ENCODE measurements at regions of chr5 and their contacts with region 1.

Region 1: GRCh38 chr5:56358703-56359681 is 125.9 kb upstream of the ANKRD55 start:
- DNase-seq: peak; percentile 91 to 96
- H3K4me3 ChIP-seq: no peak overlapping the region
- H3K4me3 Mint-ChIP-seq: peak overlapping the region; percentile 68
- H3K27ac Mint-ChIP-seq: peak overlapping the region; percentile 85
- H3K4me1 ChIP-seq: peaks cover 61% of the 10 kb centered on the region
- H3K4me1 Mint-ChIP-seq: peaks cover 50% of the 10 kb centered on the region
- H3K27me3 ChIP-seq: no peaks in the 10 kb centered on the region
- H3K27me3 Mint-ChIP-seq: no peaks in the 10 kb centered on the region
- CTCF ChIP-seq: no peak

Region 2: GRCh38 chr5:56175488-56175887 is 183.5 kb before region 1 on chr5:
- CTCF ChIA-PET with region 1: no interaction called
- POLR2A ChIA-PET with region 1: no interaction called
- intact Hi-C with region 1: no loop called
- DNase-seq: peak; percentile 56 to 68
- H3K4me3 ChIP-seq: no peak overlapping the region
- H3K4me3 Mint-ChIP-seq: peak overlapping the region; percentile 15
- H3K27ac Mint-ChIP-seq: peak overlapping the region; percentile 96
- H3K4me1 ChIP-seq: peaks cover 19% of the 10 kb centered on the region
- H3K4me1 Mint-ChIP-seq: peaks cover 20% of the 10 kb centered on the region
- H3K27me3 ChIP-seq: no peaks in the 10 kb centered on the region
- H3K27me3 Mint-ChIP-seq: no peaks in the 10 kb centered on the region
- CTCF ChIP-seq: no peak

Region 3: GRCh38 chr5:56270568-56271392 is 88.2 kb before region 1 on chr5:
- CTCF ChIA-PET with region 1: interaction called, 4 read pairs
- POLR2A ChIA-PET with region 1: no interaction called
- intact Hi-C with region 1: loop called (anchors 1 kb)
- DNase-seq: peak; percentile 89 to 92
- H3K4me3 ChIP-seq: no peak overlapping the region
- H3K4me3 Mint-ChIP-seq: no peak overlapping the region
- H3K27ac Mint-ChIP-seq: peak overlapping the region; percentile 74
- H3K4me1 ChIP-seq: peaks cover 25% of the 10 kb centered on the region
- H3K4me1 Mint-ChIP-seq: peaks cover 29% of the 10 kb centered on the region
- H3K27me3 ChIP-seq: no peaks in the 10 kb centered on the region
- H3K27me3 Mint-ChIP-seq: no peaks in the 10 kb centered on the region
- CTCF ChIP-seq: peak; percentile 99

Region 4: DNA sequence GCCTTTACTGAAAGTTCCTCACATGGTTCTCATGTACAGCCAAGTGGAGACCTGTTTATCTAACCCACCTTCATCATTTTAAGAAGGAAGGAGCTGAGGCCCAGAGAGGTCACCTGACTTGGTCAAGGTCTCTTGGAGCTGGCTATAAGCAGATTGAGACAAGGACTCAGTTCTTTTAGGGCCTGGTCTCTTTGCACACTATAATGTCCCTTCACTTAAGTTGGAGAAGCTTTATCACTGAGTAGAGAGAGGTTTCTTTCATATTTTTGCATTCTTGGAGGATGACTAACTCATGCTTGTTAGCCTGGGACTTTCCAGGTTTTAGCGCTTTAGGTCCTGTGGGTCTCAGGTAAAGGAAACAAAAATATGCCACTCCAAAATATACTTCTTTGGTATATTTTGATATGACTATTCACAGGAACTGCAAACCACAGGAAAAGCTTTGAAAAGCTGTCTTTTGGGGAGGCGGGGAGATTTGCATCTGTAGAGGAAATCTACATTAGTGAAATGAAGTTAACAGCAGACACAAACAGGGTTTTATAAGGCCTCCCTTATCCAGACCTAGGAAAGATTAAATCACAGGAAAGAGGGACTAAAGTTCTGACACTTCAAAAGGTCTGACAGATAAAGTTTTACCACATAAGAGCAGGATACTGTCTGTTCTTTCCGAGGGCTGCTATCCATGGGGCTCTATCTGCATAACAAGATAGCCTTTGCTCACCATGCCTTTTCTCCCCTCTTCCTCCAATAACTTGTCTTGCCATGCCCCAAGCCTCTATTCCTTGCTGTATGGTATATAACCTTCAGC is 30.0 kb before region 1 on chr5:
- CTCF ChIA-PET with region 1: no interaction called
- POLR2A ChIA-PET with region 1: interaction called, 3 read pairs
- intact Hi-C with region 1: loop called (anchors 2 kb)
- DNase-seq: peak; percentile 26 to 57
- H3K4me3 ChIP-seq: no peak overlapping the region
- H3K4me3 Mint-ChIP-seq: no peak overlapping the region
- H3K27ac Mint-ChIP-seq: peak overlapping the region; percentile 75
- H3K4me1 ChIP-seq: peaks cover 64% of the 10 kb centered on the region
- H3K4me1 Mint-ChIP-seq: peaks cover 50% of the 10 kb centered on the region
- H3K27me3 ChIP-seq: no peaks in the 10 kb centered on the region
- H3K27me3 Mint-ChIP-seq: no peaks in the 10 kb centered on the region
- CTCF ChIP-seq: no peak

Region 5: GRCh38 chr5:56415356-56415765 is 56.4 kb after region 1 on chr5:
- CTCF ChIA-PET with region 1: interaction called, 4 read pairs
- POLR2A ChIA-PET with region 1: interaction called, 3 read pairs
- intact Hi-C with region 1: loop called (anchors 1 kb)
- DNase-seq: peak; percentile 82 to 90
- H3K4me3 ChIP-seq: no peak overlapping the region
- H3K4me3 Mint-ChIP-seq: peak overlapping the region; percentile 64
- H3K27ac Mint-ChIP-seq: peak overlapping the region; percentile 95
- H3K4me1 ChIP-seq: peaks cover 73% of the 10 kb centered on the region
- H3K4me1 Mint-ChIP-seq: peaks cover 45% of the 10 kb centered on the region
- H3K27me3 ChIP-seq: no peaks in the 10 kb centered on the region
- H3K27me3 Mint-ChIP-seq: no peaks in the 10 kb centered on the region
- CTCF ChIP-seq: no peak

Region 6: DNA sequence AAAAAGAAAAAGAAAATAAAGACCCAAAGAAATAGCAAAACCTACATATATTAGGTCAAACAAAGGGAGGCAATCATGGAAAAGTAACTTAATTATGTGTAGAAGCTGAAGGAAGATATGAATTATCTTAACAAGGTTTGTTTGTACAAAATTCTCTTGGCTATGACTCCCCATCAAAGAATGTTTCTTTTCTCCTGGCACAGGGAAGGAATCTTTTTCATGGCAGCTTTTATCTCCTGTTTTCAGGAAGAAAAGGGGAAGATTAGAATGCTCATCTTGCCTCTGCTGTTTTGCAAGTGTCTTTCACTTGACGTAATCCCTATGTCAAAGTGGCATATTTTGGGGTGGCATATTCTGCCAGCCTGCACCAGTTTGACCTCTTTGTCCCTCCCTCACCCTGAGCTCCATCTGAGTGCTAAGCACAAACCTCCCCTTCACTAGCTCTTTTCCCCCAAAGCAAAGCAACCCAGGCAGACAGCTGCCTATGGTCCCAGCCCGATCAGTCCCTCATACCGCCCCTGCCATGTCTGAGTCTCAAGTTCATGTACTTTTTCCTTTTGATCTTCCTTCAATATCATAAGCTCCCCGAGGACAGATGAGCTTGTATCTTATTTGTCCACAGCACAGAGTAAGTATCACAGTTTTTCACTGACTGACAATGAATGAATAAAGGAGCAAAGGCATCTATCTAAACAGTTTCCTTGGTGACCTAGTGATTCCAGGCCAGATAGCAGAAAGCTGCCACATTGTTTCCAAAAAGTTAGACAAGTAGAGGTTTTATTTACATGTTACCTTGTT is 116.9 kb after region 1 on chr5:
- CTCF ChIA-PET with region 1: no interaction called
- POLR2A ChIA-PET with region 1: interaction called, 5 read pairs
- intact Hi-C with region 1: loop called (anchors 1 kb)
- DNase-seq: no peak
- H3K4me3 ChIP-seq: no peak overlapping the region
- H3K4me3 Mint-ChIP-seq: peak overlapping the region; percentile 8
- H3K27ac Mint-ChIP-seq: peak overlapping the region; percentile 45
- H3K4me1 ChIP-seq: peaks cover 68% of the 10 kb centered on the region
- H3K4me1 Mint-ChIP-seq: peaks cover 36% of the 10 kb centered on the region
- H3K27me3 ChIP-seq: no peaks in the 10 kb centered on the region
- H3K27me3 Mint-ChIP-seq: no peaks in the 10 kb centered on the region
- CTCF ChIP-seq: no peak

Region 7: DNA sequence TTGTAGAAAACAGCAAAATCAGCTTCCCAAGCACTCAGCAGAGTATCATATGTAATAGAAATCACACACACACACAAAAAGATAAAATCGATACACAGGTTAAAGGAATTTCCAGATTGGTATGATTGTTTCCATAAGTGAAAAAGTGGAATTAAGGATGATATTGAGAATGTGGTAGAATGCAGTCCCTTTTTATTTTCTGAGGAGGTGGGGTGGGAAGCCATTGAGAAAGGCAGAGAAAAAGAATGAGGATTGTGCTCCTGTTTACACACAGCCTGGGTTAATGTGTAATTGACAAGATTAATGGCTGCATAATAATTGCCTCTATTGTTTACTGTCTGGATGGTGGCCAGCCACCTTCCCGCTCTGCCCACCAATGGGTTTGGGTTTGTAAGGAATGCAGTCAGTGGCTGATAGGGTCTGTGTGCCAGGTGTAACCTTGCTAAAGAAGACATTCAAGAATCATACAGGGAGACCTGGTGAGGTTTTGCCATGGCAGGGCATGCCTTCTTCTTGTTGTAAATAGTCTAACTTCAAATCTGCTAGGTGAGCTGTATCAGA is 279.1 kb after region 1 on chr5:
- CTCF ChIA-PET with region 1: no interaction called
- POLR2A ChIA-PET with region 1: interaction called, 3 read pairs
- intact Hi-C with region 1: loop called (anchors 1 kb)
- DNase-seq: peak; percentile 81 to 90
- H3K4me3 ChIP-seq: no peak overlapping the region
- H3K4me3 Mint-ChIP-seq: peak overlapping the region; percentile 55
- H3K27ac Mint-ChIP-seq: peak overlapping the region; percentile 90
- H3K4me1 ChIP-seq: peaks cover 84% of the 10 kb centered on the region
- H3K4me1 Mint-ChIP-seq: peaks cover 61% of the 10 kb centered on the region
- H3K27me3 ChIP-seq: no peaks in the 10 kb centered on the region
- H3K27me3 Mint-ChIP-seq: no peaks in the 10 kb centered on the region
- CTCF ChIP-seq: no peak

Region 8: DNA sequence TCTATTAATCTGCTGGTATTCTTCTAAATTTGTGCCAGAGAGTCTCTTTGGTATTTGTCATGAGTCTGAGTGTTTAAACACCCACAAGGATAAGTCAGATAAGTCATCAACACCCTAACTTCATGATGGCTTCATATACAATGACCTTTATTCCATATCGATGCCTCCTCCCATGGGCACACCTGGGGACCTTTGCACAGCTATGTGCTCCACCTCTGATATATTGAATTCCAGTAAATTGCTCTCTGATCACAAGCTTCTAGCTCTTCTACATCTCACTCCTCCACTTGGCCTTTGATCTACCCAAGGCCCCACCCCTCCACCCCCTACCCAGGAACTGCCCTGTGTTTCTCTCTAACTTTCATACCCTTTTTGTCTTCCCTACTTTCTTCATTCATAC is 695.7 kb after region 1 on chr5:
- CTCF ChIA-PET with region 1: no interaction called
- POLR2A ChIA-PET with region 1: no interaction called
- intact Hi-C with region 1: no loop called
- DNase-seq: no peak
- H3K4me3 ChIP-seq: no peak overlapping the region
- H3K4me3 Mint-ChIP-seq: no peak overlapping the region
- H3K27ac Mint-ChIP-seq: no peak overlapping the region
- H3K4me1 ChIP-seq: 0 out of 2 replicates have a peak, but pooled peaks cover 12% of the 10 kb centered on the region
- H3K4me1 Mint-ChIP-seq: no peaks in the 10 kb centered on the region
- H3K27me3 ChIP-seq: no peaks in the 10 kb centered on the region
- H3K27me3 Mint-ChIP-seq: no peaks in the 10 kb centered on the region
- CTCF ChIP-seq: no peak

Measured in Caco-2 (cell line).